Activated B cell treated with CpG ODN at 0.5 μM for 24 hours (primary cell): ENCODE measurements at regions of chr2 and their contacts with region 1.

Region 1: GRCh38 chr2:61993444-61994024 is 88.1 kb downstream of the COMMD1 start:
- DNase-seq: no peak
- ATAC-seq: peak; percentile 75
- H3K4me3 Mint-ChIP-seq: no peak overlapping the region
- H3K27ac Mint-ChIP-seq: no peak overlapping the region
- H3K4me1 Mint-ChIP-seq: peaks cover 2% of the 10 kb centered on the region
- H3K27me3 Mint-ChIP-seq: no peaks in the 10 kb centered on the region
- CTCF ChIP-seq: no peak

Region 2: DNA sequence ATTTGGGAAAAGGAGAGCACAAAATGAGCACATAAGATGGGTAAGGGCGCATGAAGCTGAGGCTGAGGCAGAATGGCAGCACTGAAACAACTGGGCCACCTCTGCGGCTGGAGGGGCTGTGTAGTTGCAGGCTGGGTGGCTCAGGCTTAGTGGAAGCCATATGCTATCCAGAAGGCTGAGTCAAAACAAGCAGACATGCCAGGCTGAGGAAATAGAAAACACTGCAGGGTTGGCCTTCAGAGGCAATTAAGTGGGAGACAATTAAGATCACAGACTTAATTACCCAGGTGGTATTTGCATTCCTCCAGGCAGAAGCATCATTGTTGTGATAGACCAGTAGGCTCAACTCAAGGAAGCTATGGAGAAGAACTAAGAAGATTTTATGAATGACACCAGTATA is 444.0 kb before region 1 on chr2:
- CTCF ChIA-PET with region 1: no interaction called
- POLR2A ChIA-PET with region 1: no interaction called
- intact Hi-C with region 1: no loop called
- DNase-seq: no peak
- ATAC-seq: no peak
- H3K4me3 Mint-ChIP-seq: no peak overlapping the region
- H3K27ac Mint-ChIP-seq: no peak overlapping the region
- H3K4me1 Mint-ChIP-seq: no peaks in the 10 kb centered on the region
- H3K27me3 Mint-ChIP-seq: no peaks in the 10 kb centered on the region
- CTCF ChIP-seq: no peak

Region 3: DNA sequence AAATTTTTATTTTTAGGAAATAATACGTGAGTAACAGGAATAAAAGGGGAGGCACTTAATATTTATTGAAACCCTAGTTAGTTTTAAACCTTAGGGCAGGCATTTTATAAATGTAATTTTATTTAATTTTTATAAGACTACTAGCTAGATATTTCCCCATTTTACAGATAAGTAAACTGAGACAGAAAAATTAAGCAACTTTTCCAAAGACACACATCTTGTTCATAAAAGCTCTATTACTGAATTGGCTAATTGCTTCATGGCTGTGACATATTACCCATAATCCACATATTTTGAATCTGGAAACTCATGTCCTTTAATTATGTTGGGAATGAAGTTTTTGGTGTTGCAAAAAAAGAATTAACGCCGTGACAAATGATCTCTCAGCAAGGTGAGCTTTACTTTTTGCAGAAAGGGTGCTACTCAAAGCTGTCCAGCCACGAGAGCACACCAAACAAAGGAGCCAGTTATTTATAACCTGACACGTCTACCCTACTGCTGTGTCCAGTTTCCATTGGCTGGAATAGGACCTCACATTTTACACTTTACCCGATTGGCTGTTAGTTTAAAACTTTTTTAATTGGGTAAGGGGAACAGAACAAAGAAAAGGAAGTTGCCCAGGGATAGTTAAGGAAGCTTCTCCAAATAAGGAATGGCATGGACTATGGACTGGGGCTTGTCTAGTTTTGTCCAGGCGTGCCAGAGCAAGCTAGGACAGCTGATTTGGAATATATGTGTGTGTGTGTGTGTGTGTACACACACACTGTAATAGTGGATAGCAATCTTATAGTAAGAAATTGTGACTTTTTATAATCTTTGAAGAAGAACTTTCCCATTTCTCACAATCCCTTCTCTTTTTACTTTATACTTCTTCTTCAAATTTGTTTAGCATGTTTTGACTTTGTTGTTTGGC is 33.9 kb before region 1 on chr2:
- CTCF ChIA-PET with region 1: no interaction called
- POLR2A ChIA-PET with region 1: no interaction called
- intact Hi-C with region 1: no loop called
- DNase-seq: no peak
- ATAC-seq: no peak
- H3K4me3 Mint-ChIP-seq: no peak overlapping the region
- H3K27ac Mint-ChIP-seq: no peak overlapping the region
- H3K4me1 Mint-ChIP-seq: peaks cover 3% of the 10 kb centered on the region
- H3K27me3 Mint-ChIP-seq: no peaks in the 10 kb centered on the region
- CTCF ChIP-seq: no peak

Region 4: DNA sequence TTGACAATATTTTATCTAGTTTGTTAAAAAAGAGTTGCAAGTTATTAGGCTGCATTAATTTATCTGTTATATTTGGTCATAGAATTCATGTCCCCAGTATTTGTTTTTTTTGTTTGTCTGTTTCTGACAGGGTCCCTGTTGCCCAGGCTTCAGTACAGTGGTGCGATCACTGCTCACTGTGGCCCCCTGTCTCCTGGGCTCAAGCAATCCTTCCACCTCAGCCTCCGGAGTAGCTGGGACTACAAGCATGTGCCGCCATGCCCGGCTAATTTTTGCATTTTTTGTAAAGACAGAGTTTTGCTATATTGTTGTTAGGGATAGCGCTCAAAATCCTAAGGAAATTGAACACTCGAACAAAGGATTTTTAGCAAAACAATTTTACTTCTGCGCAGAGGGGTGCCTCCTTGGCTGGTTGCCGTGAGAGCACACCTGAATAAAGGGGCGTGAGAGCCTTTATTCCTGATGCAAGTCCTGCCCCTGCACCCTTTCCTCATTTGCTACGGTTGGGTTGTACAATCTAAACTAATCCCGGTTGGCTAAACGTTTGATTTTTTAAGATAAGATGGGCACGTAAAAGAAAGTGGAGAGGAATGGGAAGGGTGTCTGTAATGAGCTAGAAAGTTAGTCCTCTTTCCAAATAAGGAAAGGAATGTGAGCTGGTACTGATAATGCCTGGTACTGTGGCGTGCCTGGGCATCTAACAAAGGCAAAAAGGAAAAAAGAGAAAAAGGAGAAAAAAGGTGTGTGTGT is 22.6 kb before region 1 on chr2:
- CTCF ChIA-PET with region 1: no interaction called
- POLR2A ChIA-PET with region 1: no interaction called
- intact Hi-C with region 1: no loop called
- DNase-seq: no peak
- ATAC-seq: no peak
- H3K4me3 Mint-ChIP-seq: no peak overlapping the region
- H3K27ac Mint-ChIP-seq: no peak overlapping the region
- H3K4me1 Mint-ChIP-seq: peaks cover 2% of the 10 kb centered on the region
- H3K27me3 Mint-ChIP-seq: no peaks in the 10 kb centered on the region
- CTCF ChIP-seq: no peak

Region 5: GRCh38 chr2:62140426-62141141 is 147.1 kb after region 1 on chr2:
- CTCF ChIA-PET with region 1: no interaction called
- POLR2A ChIA-PET with region 1: no interaction called
- intact Hi-C with region 1: loop called (anchors 5 kb)
- DNase-seq: no peak
- ATAC-seq: no peak
- H3K4me3 Mint-ChIP-seq: no peak overlapping the region
- H3K27ac Mint-ChIP-seq: peak overlapping the region; percentile 62
- H3K4me1 Mint-ChIP-seq: peaks cover 39% of the 10 kb centered on the region
- H3K27me3 Mint-ChIP-seq: no peaks in the 10 kb centered on the region
- CTCF ChIP-seq: no peak

Region 6: DNA sequence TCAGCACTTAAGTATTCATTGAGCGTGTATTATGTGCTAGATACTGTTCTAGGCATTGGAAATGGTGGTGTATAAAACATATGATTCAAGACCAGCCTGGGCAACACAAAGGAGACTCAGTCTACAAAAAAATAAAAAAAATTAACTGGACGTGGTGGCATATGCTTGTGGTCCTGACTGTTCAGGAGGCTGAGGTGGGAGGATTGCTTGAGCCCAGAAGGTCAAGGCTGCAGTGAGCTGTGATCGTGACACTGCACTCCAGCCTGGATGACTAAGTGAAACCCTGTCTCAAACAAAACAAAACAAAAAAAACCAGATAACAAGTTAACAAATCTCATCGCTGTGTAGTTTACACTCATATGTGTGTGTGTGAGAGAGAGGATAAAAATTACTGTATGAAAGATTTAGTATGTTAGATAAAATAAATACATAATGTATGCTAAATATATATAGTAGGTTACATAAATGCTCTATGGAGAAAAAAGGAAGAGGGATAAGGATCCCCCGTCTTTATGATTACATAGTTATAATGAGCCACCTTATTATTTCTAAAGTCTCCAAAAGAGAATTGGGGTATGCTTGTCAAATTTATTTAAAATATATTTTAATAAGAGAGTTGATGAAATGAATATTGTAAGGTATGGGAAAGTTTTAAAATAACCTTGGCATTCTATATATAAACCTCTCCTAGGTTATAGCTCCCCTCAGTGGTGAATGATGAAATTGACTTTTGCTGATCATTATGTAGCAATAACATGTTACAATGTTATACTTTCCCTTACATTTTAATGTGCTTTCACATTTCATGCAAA is 781.2 kb after region 1 on chr2:
- CTCF ChIA-PET with region 1: interaction called, 6 read pairs
- POLR2A ChIA-PET with region 1: no interaction called
- intact Hi-C with region 1: loop called (anchors 2 kb)
- DNase-seq: no peak
- ATAC-seq: peak; percentile 21
- H3K4me3 Mint-ChIP-seq: no peak overlapping the region
- H3K27ac Mint-ChIP-seq: no peak overlapping the region
- H3K4me1 Mint-ChIP-seq: peaks cover 1% of the 10 kb centered on the region
- H3K27me3 Mint-ChIP-seq: no peaks in the 10 kb centered on the region
- CTCF ChIP-seq: peak; percentile 87